Left lung (tissue), 14 donors: ENCODE measurements at regions of chr17 and their contacts with region 1.

Region 1: GRCh38 chr17:75524953-75525719 is at the start of gene LLGL2:
- DNase-seq: peak; percentile 72 to 96 (median 86)
- ATAC-seq: peak; percentile 92
- H3K4me3 ChIP-seq: peak within 1 kb of the TSS; percentile 50 to 73
- H3K27ac ChIP-seq: peak within 1 kb of the TSS; percentile 72 to 76
- H3K4me1 ChIP-seq: peaks cover 0 to 20% of the 10 kb centered on the region in 2 donors
- H3K27me3 ChIP-seq: peaks cover 0 to 15% of the 10 kb centered on the region in 2 donors
- CTCF ChIP-seq: peak; percentile 35 to 36
- polyA plus RNA-seq, gene LLGL2: 38.0 to 66.0 (median 48.1) TPM

Region 2: GRCh38 chr17:75338335-75338734 is 186.8 kb before region 1 on chr17:
- intact Hi-C with region 1: no loop called
- DNase-seq: no peak
- ATAC-seq: no peak
- H3K4me3 ChIP-seq: no peak overlapping the region
- H3K27ac ChIP-seq: peak overlapping the region in 1 of 2 donors; percentile 65
- H3K4me1 ChIP-seq: peaks cover 0 to 78% of the 10 kb centered on the region in 2 donors
- H3K27me3 ChIP-seq: no peaks in the 10 kb centered on the region
- CTCF ChIP-seq: no peak

Region 3: DNA sequence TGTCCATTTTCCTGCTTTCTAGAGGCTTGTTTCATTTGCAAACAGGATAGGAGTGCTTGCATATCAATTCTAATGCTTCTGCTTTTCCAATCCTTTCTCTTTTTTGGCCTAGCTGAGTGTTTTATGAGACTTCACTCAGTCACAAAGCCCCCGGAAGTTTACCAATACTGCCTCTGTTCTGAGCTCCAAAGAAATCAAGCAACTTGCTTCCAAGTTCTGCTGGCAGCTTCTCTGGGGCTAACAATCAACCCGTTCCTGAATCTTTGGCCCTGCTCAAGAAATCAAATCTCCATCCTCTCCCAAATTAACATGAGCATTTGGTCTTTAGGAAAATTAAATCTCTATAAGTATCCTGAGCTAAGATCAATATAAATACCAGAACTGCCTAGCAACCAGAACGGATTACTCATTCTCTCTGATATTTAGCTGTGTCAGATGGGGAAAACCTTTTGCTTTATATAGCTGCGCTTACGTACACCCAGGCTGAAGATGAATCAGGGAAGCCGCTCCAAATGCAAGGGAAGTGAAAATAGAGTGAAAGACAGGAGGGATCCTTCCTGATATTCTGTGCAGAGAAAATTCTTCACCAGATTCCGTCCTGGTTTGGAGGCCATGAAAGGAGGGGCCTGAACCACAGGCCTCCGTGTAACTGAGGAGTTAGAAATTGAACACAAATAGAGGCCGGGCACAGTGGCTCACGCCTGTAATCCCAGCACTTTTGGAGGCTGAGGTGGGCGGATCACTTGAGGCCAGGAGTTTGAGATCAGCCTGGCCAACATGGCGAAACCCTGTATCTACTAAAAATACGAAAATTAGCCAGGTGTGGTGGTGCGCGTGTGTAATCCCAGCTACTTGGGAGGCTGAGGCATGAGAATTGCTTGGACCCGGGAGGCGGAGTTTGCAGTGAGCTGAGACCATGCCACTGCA is 96.3 kb before region 1 on chr17:
- intact Hi-C with region 1: loop called in 1 of 2 experiments (anchors 10 kb)
- DNase-seq: peak in 1 of 4 donors; percentile 26
- ATAC-seq: peak; percentile 21
- H3K4me3 ChIP-seq: no peak overlapping the region
- H3K27ac ChIP-seq: peak overlapping the region; percentile 30 to 65
- H3K4me1 ChIP-seq: peaks cover 8 to 24% of the 10 kb centered on the region in 2 donors
- H3K27me3 ChIP-seq: no peaks in the 10 kb centered on the region
- CTCF ChIP-seq: no peak

Region 4: GRCh38 chr17:75589012-75589918 is 64.1 kb after region 1 on chr17:
- intact Hi-C with region 1: loop called in 1 of 2 experiments (anchors 10 kb)
- DNase-seq: peak; percentile 92 to 100 (median 96)
- ATAC-seq: peak; percentile 90
- H3K4me3 ChIP-seq: peak overlapping the region; percentile 57 to 61
- H3K27ac ChIP-seq: peak overlapping the region; percentile 93 to 97
- H3K4me1 ChIP-seq: peaks cover 8 to 23% of the 10 kb centered on the region in 2 donors
- H3K27me3 ChIP-seq: no peaks in the 10 kb centered on the region
- CTCF ChIP-seq: peak; percentile 62 to 82

Region 5: DNA sequence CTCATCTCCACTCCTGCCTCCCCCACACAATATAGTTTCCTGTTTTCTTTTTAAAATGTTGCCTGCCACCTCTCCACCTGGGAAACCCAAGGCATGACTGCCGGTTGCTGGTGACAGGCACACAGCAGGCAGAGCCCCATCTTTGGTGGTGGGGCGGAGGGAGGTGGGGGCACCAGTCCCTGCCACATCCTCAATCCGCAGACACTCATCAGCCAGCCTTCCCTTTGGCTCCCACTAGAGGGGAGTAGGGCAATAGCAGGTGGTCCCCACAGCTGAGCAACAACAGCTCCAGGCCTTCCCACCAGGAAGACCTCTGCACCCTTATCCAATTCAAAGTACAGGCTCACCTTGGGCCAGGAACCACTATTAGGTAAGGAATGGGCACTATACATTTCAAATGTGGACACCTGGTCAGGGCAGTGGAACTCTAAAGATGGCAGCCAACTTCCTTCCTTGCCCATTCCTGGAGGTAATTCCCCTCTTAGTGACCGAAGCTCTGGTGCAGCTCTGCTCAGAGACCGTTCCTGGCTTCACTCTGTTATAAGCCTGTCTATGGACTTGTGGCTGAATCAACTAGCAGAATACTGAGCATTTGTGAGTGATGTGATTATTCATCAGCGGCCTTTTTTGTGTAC is 127.9 kb after region 1 on chr17:
- intact Hi-C with region 1: no loop called
- DNase-seq: no peak
- ATAC-seq: peak; percentile 76
- H3K4me3 ChIP-seq: no peak overlapping the region
- H3K27ac ChIP-seq: no peak overlapping the region
- H3K4me1 ChIP-seq: peaks cover 0 to 19% of the 10 kb centered on the region in 2 donors
- H3K27me3 ChIP-seq: no peaks in the 10 kb centered on the region
- CTCF ChIP-seq: peak; percentile 47 to 61